A673 (cell line): ENCODE measurements at regions of chr1 and their contacts with region 1.

Region 1: GRCh38 chr1:109112652-109113285 is 1.1 kb upstream of the ELAPOR1 start:
- DNase-seq: peak; percentile 97
- H3K4me3 ChIP-seq: peak overlapping the region; percentile 35
- H3K27ac ChIP-seq: no peak overlapping the region
- H3K4me1 ChIP-seq: peaks cover 19% of the 10 kb centered on the region
- H3K27me3 ChIP-seq: peaks cover 37% of the 10 kb centered on the region
- CTCF ChIP-seq: peak; percentile 99

Region 2: DNA sequence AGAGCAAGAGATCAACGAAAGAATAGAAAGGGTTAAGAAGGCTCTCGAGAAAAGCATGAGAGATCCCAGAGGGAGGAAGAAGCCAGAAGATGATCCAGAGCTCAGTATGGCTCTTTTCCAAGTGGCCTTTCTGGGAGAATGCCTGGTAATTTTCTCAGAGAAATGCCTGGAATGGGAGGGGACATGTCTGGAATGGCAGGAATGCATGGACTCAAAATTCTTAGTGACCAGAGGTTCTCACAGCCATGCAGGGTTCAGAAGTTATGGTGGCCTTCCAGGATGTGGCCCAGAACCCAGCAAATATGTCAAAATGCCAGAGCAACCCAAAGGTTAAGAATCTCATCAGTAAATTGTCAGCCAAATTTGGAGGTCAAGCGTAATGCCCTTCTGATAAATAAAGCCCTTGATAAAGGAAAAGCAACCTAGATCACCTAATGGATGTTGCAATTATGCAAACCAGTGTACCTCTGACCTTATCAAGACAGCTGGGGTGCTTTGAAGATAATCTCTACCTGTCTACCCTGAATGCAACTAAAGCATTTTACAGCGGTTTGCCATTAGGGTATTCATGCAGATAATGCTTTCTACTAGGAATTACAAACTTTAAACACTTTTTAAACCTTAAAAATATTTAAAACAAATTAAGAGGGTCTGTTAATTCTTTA is 609.6 kb before region 1 on chr1:
- CTCF ChIA-PET with region 1: no interaction called
- POLR2A ChIA-PET with region 1: no interaction called
- intact Hi-C with region 1: no loop called
- DNase-seq: no peak
- H3K4me3 ChIP-seq: no peak overlapping the region
- H3K27ac ChIP-seq: no peak overlapping the region
- H3K4me1 ChIP-seq: no peaks in the 10 kb centered on the region
- H3K27me3 ChIP-seq: peaks cover 9% of the 10 kb centered on the region
- CTCF ChIP-seq: no peak

Region 3: DNA sequence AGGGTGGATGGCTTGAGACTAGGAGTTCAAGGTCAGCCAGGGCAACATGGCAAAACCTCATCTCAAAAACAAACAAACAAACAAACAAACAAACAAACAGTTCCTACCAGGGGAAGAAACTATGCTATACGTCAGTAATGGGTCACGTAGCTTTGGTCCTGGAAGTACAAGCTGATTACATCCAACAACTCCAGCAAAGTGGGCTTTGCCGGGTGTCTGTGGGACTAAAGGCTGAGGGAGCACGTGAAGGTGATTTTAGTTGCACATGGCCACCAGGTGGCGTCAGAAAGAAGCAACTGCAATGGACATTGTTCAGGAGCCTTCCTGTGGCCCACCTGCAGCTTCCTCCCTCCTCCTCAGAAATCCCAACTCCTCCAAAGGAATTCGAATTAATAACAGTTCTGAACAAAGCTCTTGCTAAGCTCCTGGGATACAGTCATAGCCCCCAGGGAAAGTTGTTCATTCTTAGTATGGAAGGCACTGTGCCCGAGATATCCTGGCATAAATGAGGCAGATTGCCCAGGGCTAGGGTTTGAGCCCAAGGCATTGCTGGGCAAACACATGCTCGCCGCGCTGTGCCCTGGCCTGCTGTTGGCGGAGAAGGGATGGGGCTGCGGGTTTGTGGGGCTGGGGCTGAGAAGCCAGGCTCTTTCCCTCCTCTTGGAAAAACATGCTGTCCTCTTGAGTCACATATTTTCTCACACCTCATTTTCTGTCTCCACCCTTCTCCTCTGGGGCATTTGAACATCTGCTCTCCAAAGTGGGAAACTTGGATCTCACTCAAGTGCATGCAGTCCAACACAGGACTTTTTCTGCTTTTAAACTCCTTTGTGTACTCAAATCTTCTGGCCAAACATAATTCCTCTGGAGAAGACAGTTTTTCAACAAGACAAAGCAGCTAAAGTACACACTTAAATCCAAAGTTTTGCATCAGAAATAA is 284.5 kb before region 1 on chr1:
- CTCF ChIA-PET with region 1: no interaction called
- POLR2A ChIA-PET with region 1: no interaction called
- intact Hi-C with region 1: loop called (anchors 5 kb)
- DNase-seq: peak; percentile 82
- H3K4me3 ChIP-seq: no peak overlapping the region
- H3K27ac ChIP-seq: no peak overlapping the region
- H3K4me1 ChIP-seq: peaks cover 3% of the 10 kb centered on the region
- H3K27me3 ChIP-seq: no peaks in the 10 kb centered on the region
- CTCF ChIP-seq: peak; percentile 87